ENCODE measurements at regions of chr6 and their contacts with region 1.

Region 1: GRCh38 chr6:436308-437036 is 44.9 kb downstream of the IRF4 start:
- DNase-seq: peak; percentile 56 to 88
- H3K4me3 ChIP-seq: no peak overlapping the region
- CTCF ChIP-seq: no peak
- POLR2A ChIP-seq: no peak

Region 2: DNA sequence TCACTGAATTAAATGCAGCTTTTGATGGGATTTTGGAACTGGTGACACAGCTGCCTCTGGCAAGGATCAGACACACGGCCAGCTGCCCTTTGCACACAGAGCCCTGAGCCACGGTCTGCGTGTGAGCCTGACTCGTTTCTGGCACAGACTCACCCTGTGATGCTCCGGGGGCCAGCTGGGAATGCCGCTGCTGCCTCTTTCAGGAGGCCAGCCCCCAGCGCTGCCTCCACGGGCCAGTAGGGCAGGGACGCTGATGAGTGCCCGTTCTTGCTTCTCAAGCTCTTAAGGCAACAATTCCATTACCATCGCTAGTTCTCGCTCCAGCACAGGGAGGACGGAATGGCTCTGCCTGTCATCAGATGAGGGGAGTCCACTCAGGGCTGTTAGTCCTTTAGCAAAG is 16.7 kb after region 1 on chr6:
- intact Hi-C with region 1: no loop called
- DNase-seq: peak; percentile 63 to 93
- H3K4me3 ChIP-seq: no peak overlapping the region
- CTCF ChIP-seq: no peak
- POLR2A ChIP-seq: no peak

Region 3: DNA sequence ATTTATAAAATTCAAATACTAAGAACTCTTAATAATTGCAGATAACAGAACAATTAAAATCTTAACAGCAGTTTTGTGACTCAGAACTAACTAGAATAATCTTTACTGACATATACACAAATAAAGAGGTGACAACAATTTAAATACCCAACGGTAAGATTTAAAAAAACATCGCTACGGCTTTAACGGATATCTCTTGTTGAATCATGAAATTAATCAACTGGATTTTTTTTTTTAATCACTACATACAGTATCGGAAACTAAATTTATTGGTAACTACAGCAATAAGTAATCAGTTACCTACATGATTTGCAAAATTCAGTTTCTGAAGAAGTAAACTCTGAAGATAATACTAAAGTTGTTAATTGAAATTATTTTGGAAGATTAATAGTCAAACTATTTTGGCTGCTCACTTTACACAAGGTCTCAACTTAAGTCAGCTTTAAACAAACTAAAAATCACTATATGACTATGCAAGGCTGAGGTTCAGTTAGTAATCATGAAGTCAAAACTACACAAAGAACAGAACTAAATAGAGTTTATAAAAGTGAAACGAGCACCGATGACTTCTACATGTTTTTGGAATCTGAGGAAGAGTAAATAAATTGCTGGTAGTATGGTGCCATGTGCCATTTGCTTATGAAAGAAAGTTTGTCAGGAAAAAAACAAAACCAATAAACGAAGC is 91.7 kb after region 1 on chr6:
- intact Hi-C with region 1: no loop called
- DNase-seq: no peak
- H3K4me3 ChIP-seq: no peak overlapping the region
- CTCF ChIP-seq: no peak
- POLR2A ChIP-seq: no peak

Region 4: GRCh38 chr6:1554476-1555310 is 1118.2 kb after region 1 on chr6:
- intact Hi-C with region 1: loop called (anchors 5 kb)
- DNase-seq: peak; percentile 43 to 93
- H3K4me3 ChIP-seq: peak overlapping the region; percentile 45
- CTCF ChIP-seq: no peak
- POLR2A ChIP-seq: no peak

Measured in lower leg skin (tissue), 4 donors.